CD4-positive, alpha-beta memory T cell (primary cell): ENCODE measurements at regions of chr6 and their contacts with region 1.

Region 1: DNA sequence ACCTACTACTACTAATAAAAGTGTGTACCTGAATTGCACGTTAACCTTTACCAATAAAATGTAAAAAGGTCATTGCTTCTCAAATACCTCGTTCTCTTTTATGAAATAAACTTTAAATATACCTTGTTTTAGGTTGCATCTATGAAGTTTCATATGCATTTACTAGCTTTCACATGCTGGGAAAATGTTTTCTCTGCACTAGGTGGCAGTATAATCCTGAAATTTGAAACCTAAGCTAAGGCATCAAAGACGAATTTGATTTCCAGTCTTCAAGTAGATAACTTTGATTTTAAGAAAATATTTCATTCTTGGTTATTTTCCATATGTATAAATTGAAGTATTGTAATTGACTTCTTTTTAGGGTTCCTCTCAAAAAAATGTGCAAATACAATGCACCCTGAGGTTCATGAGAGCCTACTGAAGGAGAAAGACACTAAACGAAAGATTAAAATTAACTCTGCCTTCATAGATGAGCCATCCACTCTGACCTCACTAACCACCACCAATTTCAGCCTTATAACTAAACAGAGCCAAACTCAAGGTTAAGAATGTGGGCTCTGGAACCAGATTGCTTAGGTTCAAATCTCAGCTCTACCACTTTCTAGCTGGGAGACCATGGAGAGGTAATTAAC is 7.3 kb upstream of the COL9A1 start:
- DNase-seq: peak in 4 of 5 donors; percentile 4 to 15 (median 12)
- H3K4me3 ChIP-seq: no peak overlapping the region
- H3K4me3 Mint-ChIP-seq: no peak overlapping the region
- H3K27ac ChIP-seq: no peak overlapping the region
- H3K27ac Mint-ChIP-seq: no peak overlapping the region
- H3K4me1 ChIP-seq: no peaks in the 10 kb centered on the region
- H3K4me1 Mint-ChIP-seq: peaks cover 0 to under 1% (median 0%) of the 10 kb centered on the region in 4 donors
- H3K27me3 ChIP-seq: no peaks in the 10 kb centered on the region
- H3K27me3 Mint-ChIP-seq: peaks cover 11 to 13% of the 10 kb centered on the region in 2 donors

Region 2: DNA sequence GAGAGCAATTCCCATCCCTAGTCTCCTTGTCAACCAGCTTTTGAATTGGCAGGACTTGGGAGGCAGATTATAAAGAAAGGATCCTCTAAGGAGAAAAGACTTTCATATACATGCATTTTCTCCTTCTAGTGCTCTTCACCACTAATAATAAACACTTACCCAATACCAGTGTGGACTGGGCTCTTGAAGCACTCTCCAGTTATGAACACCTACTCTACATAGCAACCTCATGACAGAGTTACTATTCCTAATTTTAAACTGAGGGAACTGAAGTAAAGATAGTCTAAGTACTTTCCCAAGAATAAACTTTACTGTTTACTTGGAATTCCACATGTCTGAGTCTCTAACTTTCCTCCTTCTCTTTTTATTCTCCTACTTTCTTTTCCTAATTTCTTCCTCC is 12.1 kb before region 1 on chr6:
- CTCF ChIA-PET with region 1: interaction called, 11 read pairs
- POLR2A ChIA-PET with region 1: no interaction called
- intact Hi-C with region 1: no loop called
- DNase-seq: no peak
- H3K4me3 ChIP-seq: no peak overlapping the region
- H3K4me3 Mint-ChIP-seq: no peak overlapping the region
- H3K27ac ChIP-seq: no peak overlapping the region
- H3K27ac Mint-ChIP-seq: no peak overlapping the region
- H3K4me1 ChIP-seq: no peaks in the 10 kb centered on the region
- H3K4me1 Mint-ChIP-seq: no peaks in the 10 kb centered on the region
- H3K27me3 ChIP-seq: no peaks in the 10 kb centered on the region
- H3K27me3 Mint-ChIP-seq: peaks cover 13 to 16% of the 10 kb centered on the region in 2 donors

Region 3: DNA sequence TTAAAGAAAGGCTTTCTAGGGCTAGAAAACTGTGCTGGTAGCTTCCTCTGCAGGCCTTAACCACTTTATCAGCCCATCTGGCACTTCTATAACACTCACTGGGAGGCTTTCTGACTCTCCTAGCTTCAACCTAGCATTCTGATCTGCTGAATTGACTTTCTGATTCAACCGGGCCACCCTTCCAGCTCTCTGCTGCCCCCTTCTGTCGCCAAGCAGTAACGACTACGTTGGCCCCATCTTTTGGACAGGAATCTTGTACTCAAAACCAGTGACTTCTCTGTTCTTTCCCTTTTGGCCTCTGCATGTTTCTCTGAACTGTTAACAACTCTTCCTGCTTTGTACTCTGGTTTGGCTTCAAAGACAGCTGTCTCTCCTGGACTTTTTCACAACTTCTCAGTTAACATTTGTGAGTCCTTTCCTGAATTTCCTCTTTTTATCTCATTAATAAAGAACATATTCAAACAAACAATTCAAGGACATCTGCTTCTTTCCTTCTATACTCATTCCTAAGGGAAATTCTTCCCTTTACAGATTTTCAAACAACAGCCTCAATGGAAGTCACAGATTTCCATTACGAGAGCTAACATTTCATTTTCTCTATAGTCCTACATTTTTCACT is 59.3 kb after region 1 on chr6:
- CTCF ChIA-PET with region 1: interaction called, 38 read pairs
- POLR2A ChIA-PET with region 1: no interaction called
- intact Hi-C with region 1: loop called (anchors 1 kb)
- DNase-seq: peak; percentile 53 to 62 (median 58)
- H3K4me3 ChIP-seq: no peak overlapping the region
- H3K4me3 Mint-ChIP-seq: no peak overlapping the region
- H3K27ac ChIP-seq: no peak overlapping the region
- H3K27ac Mint-ChIP-seq: no peak overlapping the region
- H3K4me1 ChIP-seq: no peaks in the 10 kb centered on the region
- H3K4me1 Mint-ChIP-seq: no peaks in the 10 kb centered on the region
- H3K27me3 ChIP-seq: no peaks in the 10 kb centered on the region
- H3K27me3 Mint-ChIP-seq: peaks cover 6 to 16% of the 10 kb centered on the region in 2 donors

Region 4: GRCh38 chr6:71012866-71013469 is 702.8 kb after region 1 on chr6:
- CTCF ChIA-PET with region 1: interaction called, 13 read pairs
- POLR2A ChIA-PET with region 1: no interaction called
- intact Hi-C with region 1: loop called (anchors 2 kb)
- DNase-seq: peak in 4 of 5 donors; percentile 29 to 37 (median 32)
- H3K4me3 ChIP-seq: no peak overlapping the region
- H3K4me3 Mint-ChIP-seq: no peak overlapping the region
- H3K27ac ChIP-seq: no peak overlapping the region
- H3K27ac Mint-ChIP-seq: no peak overlapping the region
- H3K4me1 ChIP-seq: no peaks in the 10 kb centered on the region
- H3K4me1 Mint-ChIP-seq: no peaks in the 10 kb centered on the region
- H3K27me3 ChIP-seq: no peaks in the 10 kb centered on the region
- H3K27me3 Mint-ChIP-seq: peaks cover 16 to 22% of the 10 kb centered on the region in 2 donors